CD8-positive, alpha-beta T cell (primary cell): ENCODE measurements at regions of chr13 and their contacts with region 1.

Region 1: DNA sequence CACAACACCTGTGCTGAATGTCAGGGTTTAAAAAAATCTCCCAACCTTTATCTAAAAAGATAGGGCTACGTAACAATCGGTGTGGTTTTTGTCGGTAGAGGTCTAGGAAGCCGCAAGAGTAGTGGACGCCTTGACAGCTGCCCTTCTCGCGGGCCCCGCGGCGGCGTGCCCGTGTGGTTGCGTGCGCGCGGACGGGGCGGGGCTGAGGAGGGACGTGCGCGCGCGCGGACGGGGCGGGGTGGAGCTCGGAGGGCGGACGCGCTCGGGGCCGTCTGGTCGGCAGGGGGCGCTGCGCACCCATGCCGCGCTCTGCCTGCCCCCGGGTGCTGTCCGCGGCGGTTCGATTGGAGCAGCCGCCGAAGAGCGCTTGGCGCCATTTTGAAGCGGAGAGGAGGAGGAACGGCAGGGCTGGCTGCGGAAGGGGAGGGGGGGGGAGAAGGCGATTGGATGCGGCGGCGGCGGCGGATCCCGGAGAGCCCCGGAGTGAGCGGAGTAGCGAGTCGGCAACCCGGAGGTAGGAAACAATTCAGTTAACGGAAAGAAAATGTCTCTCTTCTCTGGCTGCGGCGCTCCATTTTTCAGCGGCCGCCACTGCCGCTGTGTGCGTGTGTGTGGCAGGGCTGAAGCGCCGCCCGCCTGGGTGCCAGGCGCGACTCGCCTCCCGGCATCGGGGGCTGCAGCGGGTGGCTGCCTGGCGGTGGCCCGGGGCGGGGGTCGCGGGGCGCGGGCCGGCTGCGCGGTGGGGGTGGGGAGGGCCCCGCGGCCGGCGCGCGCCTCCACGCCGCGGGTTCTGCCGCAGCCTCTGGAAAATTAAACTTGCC is at the start of gene PDS5B:
- DNase-seq: peak; percentile 88 to 98 (median 95)
- ATAC-seq: peak; percentile 89
- H3K4me3 ChIP-seq: peak within 1 kb of the TSS; percentile 75 to 79
- H3K4me3 Mint-ChIP-seq: peak within 1 kb of the TSS; percentile 93
- H3K27ac ChIP-seq: peak within 1 kb of the TSS; percentile 62 to 79
- H3K27ac Mint-ChIP-seq: peak within 1 kb of the TSS; percentile 88
- H3K4me1 ChIP-seq: peaks cover 25% of the 10 kb centered on the region
- H3K4me1 Mint-ChIP-seq: peaks cover 36% of the 10 kb centered on the region
- H3K27me3 ChIP-seq: no peaks in the 10 kb centered on the region
- H3K27me3 Mint-ChIP-seq: no peaks in the 10 kb centered on the region
- CTCF ChIP-seq: peak; percentile 84
- total RNA-seq, gene PDS5B: 44.9 to 45.6 TPM

Region 2: DNA sequence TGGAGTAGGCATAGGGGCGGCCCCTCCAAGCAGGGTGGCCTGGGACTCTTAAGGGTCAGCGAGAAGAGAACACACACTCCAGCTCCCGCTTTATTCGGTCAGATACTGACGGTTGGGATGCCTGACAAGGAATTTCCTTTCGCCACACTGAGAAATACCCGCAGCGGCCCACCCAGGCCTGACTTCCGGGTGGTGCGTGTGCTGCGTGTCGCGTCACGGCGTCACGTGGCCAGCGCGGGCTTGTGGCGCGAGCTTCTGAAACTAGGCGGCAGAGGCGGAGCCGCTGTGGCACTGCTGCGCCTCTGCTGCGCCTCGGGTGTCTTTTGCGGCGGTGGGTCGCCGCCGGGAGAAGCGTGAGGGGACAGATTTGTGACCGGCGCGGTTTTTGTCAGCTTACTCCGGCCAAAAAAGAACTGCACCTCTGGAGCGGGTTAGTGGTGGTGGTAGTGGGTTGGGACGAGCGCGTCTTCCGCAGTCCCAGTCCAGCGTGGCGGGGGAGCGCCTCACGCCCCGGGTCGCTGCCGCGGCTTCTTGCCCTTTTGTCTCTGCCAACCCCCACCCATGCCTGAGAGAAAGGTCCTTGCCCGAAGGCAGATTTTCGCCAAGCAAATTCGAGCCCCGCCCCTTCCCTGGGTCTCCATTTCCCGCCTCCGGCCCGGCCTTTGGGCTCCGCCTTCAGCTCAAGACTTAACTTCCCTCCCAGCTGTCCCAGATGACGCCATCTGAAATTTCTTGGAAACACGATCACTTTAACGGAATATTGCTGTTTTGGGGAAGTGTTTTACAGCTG is 270.9 kb before region 1 on chr13 and contains the starts of genes BRCA2 and ZAR1L:
- CTCF ChIA-PET with region 1: interaction called, 3 read pairs
- POLR2A ChIA-PET with region 1: interaction called, 3 read pairs
- intact Hi-C with region 1: loop called (anchors 1 to 2 kb)
- DNase-seq: peak; percentile 73 to 95 (median 88)
- ATAC-seq: peak; percentile 90
- H3K4me3 ChIP-seq: peak within 1 kb of the TSS; percentile 80 to 81
- H3K4me3 Mint-ChIP-seq: peak within 1 kb of the TSS; percentile 93
- H3K27ac ChIP-seq: peak within 1 kb of the TSS; percentile 99
- H3K27ac Mint-ChIP-seq: peak within 1 kb of the TSS; percentile 100
- H3K4me1 ChIP-seq: peaks cover 4% of the 10 kb centered on the region
- H3K4me1 Mint-ChIP-seq: peaks cover 14% of the 10 kb centered on the region
- H3K27me3 ChIP-seq: no peaks in the 10 kb centered on the region
- H3K27me3 Mint-ChIP-seq: no peaks in the 10 kb centered on the region
- CTCF ChIP-seq: no peak
- total RNA-seq, gene BRCA2: 2.6 to 3.6 TPM
- total RNA-seq, gene ZAR1L: not detected

Region 3: GRCh38 chr13:32538621-32539246 is 47.6 kb before region 1 on chr13 and contains the start of gene N4BP2L2:
- CTCF ChIA-PET with region 1: interaction called, 4 read pairs
- POLR2A ChIA-PET with region 1: interaction called, 9 read pairs
- intact Hi-C with region 1: loop called (anchors 1 kb)
- DNase-seq: peak; percentile 82 to 97 (median 92)
- ATAC-seq: peak; percentile 95
- H3K4me3 ChIP-seq: peak within 1 kb of the TSS; percentile 78 to 91
- H3K4me3 Mint-ChIP-seq: peak within 1 kb of the TSS; percentile 99
- H3K27ac ChIP-seq: peak within 1 kb of the TSS; percentile 93 to 97
- H3K27ac Mint-ChIP-seq: peak within 1 kb of the TSS; percentile 100
- H3K4me1 ChIP-seq: peaks cover 37% of the 10 kb centered on the region
- H3K4me1 Mint-ChIP-seq: peaks cover 38% of the 10 kb centered on the region
- H3K27me3 ChIP-seq: no peaks in the 10 kb centered on the region
- H3K27me3 Mint-ChIP-seq: peaks cover 2% of the 10 kb centered on the region
- CTCF ChIP-seq: no peak
- total RNA-seq, gene N4BP2L2: 141 to 149 TPM

Region 4: GRCh38 chr13:32650705-32651311 is 64.5 kb after region 1 on chr13:
- CTCF ChIA-PET with region 1: interaction called, 35 read pairs
- POLR2A ChIA-PET with region 1: interaction called, 7 read pairs
- intact Hi-C with region 1: loop called (anchors 1 to 2 kb)
- DNase-seq: peak in 8 of 9 experiments; percentile 12 to 80 (median 56)
- ATAC-seq: peak; percentile 84
- H3K4me3 ChIP-seq: no peak overlapping the region
- H3K4me3 Mint-ChIP-seq: no peak overlapping the region
- H3K27ac ChIP-seq: no peak overlapping the region
- H3K27ac Mint-ChIP-seq: no peak overlapping the region
- H3K4me1 ChIP-seq: peaks cover 3% of the 10 kb centered on the region
- H3K4me1 Mint-ChIP-seq: peaks cover 37% of the 10 kb centered on the region
- H3K27me3 ChIP-seq: no peaks in the 10 kb centered on the region
- H3K27me3 Mint-ChIP-seq: no peaks in the 10 kb centered on the region
- CTCF ChIP-seq: peak; percentile 73

Region 5: GRCh38 chr13:32737111-32737571 is 150.9 kb after region 1 on chr13:
- CTCF ChIA-PET with region 1: no interaction called
- POLR2A ChIA-PET with region 1: no interaction called
- intact Hi-C with region 1: loop called in 1 of 2 experiments (anchors 5 kb)
- DNase-seq: peak in 2 of 9 experiments; percentile 43 to 70
- ATAC-seq: peak; percentile 79
- H3K4me3 ChIP-seq: peak overlapping the region; percentile 41 to 48
- H3K4me3 Mint-ChIP-seq: peak overlapping the region; percentile 76
- H3K27ac ChIP-seq: peak overlapping the region; percentile 76 to 91
- H3K27ac Mint-ChIP-seq: peak overlapping the region; percentile 92
- H3K4me1 ChIP-seq: peaks cover 14% of the 10 kb centered on the region
- H3K4me1 Mint-ChIP-seq: peaks cover 30% of the 10 kb centered on the region
- H3K27me3 ChIP-seq: no peaks in the 10 kb centered on the region
- H3K27me3 Mint-ChIP-seq: no peaks in the 10 kb centered on the region
- CTCF ChIP-seq: no peak

Region 6: GRCh38 chr13:33033051-33033812 is 446.9 kb after region 1 on chr13:
- CTCF ChIA-PET with region 1: no interaction called
- POLR2A ChIA-PET with region 1: no interaction called
- intact Hi-C with region 1: loop called in 1 of 2 experiments (anchors 2 kb)
- DNase-seq: peak in 7 of 9 experiments; percentile 4 to 64 (median 27)
- ATAC-seq: peak; percentile 95
- H3K4me3 ChIP-seq: peak overlapping the region in 1 of 2 experiments; percentile 44
- H3K4me3 Mint-ChIP-seq: peak overlapping the region; percentile 84
- H3K27ac ChIP-seq: no peak overlapping the region
- H3K27ac Mint-ChIP-seq: peak overlapping the region; percentile 91
- H3K4me1 ChIP-seq: peaks cover 11% of the 10 kb centered on the region
- H3K4me1 Mint-ChIP-seq: peaks cover 16% of the 10 kb centered on the region
- H3K27me3 ChIP-seq: no peaks in the 10 kb centered on the region
- H3K27me3 Mint-ChIP-seq: peaks cover 12% of the 10 kb centered on the region
- CTCF ChIP-seq: no peak

Region 7: GRCh38 chr13:33817901-33818706 is 1231.8 kb after region 1 on chr13 and contains the start of gene RFC3:
- CTCF ChIA-PET with region 1: interaction called, 3 read pairs
- POLR2A ChIA-PET with region 1: interaction called, 3 read pairs
- intact Hi-C with region 1: loop called (anchors 1 to 5 kb)
- DNase-seq: peak; percentile 81 to 95 (median 90)
- ATAC-seq: peak; percentile 86
- H3K4me3 ChIP-seq: peak within 1 kb of the TSS; percentile 72 to 74
- H3K4me3 Mint-ChIP-seq: peak within 1 kb of the TSS; percentile 93
- H3K27ac ChIP-seq: peak within 1 kb of the TSS; percentile 63 to 64
- H3K27ac Mint-ChIP-seq: peak within 1 kb of the TSS; percentile 88
- H3K4me1 ChIP-seq: peaks cover 8% of the 10 kb centered on the region
- H3K4me1 Mint-ChIP-seq: peaks cover 16% of the 10 kb centered on the region
- H3K27me3 ChIP-seq: no peaks in the 10 kb centered on the region
- H3K27me3 Mint-ChIP-seq: peaks cover 4% of the 10 kb centered on the region
- CTCF ChIP-seq: no peak
- total RNA-seq, gene RFC3: 5.8 to 6.2 TPM